ENCODE measurements at regions of chr15 and their contacts with region 1.

Region 1: GRCh38 chr15:45457641-45458433 is 64.7 kb downstream of the SLC30A4 start:
- DNase-seq: peak; percentile 82
- H3K4me3 Mint-ChIP-seq: peak overlapping the region; percentile 72
- H3K27ac Mint-ChIP-seq: peak overlapping the region; percentile 86
- H3K4me1 Mint-ChIP-seq: peaks cover 52% of the 10 kb centered on the region
- H3K27me3 Mint-ChIP-seq: peaks cover 5% of the 10 kb centered on the region

Region 2: GRCh38 chr15:45402162-45402954 is 55.5 kb before region 1 on chr15:
- CTCF ChIA-PET with region 1: interaction called, 10 read pairs
- DNase-seq: peak; percentile 97
- H3K4me3 Mint-ChIP-seq: peak overlapping the region; percentile 97
- H3K27ac Mint-ChIP-seq: peak overlapping the region; percentile 94
- H3K4me1 Mint-ChIP-seq: peaks cover 42% of the 10 kb centered on the region
- H3K27me3 Mint-ChIP-seq: no peaks in the 10 kb centered on the region

Region 3: DNA sequence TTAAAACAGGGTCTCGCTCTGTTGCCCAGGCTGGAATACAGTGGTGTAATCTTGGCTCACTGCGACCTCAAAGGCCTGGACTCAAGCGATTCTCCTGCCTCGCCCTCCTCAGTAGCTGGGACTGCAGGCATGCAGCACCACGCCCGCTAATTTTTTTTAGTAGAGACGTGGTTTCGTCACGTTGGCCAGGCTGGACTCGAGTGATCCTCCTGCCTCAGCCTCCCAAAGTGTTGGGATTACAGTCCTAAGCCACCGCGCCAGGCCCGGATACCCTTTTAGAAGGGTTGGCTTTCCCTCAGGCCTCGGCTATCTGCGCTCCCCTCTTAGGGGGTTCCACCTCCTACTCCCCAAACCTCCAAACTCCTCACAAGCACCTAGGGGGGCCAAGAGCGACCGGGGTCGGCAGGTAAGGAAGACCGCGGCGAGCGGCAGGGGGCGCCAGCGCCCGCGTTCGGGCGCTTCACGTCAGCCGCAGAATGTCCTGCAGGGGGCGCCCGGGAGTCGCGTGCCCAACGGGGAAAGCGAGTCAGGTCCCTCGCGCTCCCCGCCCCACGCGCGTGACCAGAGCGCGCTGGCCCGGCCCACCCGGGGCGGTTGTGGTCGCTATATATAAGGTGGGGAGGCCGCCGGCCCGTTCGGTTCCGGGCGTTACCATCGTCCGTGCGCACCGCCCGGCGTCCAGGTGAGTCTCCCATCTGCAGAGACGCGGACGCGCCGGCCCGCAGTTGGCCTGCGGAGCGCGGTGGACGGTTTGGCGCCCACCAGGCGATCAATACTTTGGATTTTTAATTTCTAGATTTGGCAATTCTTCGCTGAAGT is 27.7 kb before region 1 on chr15:
- CTCF ChIA-PET with region 1: interaction called, 138 read pairs
- DNase-seq: peak; percentile 89
- H3K4me3 Mint-ChIP-seq: peak overlapping the region; percentile 41
- H3K27ac Mint-ChIP-seq: no peak overlapping the region
- H3K4me1 Mint-ChIP-seq: peaks cover 5% of the 10 kb centered on the region
- H3K27me3 Mint-ChIP-seq: peaks cover 39% of the 10 kb centered on the region

Region 4: GRCh38 chr15:45442500-45443135 is 15.2 kb before region 1 on chr15:
- CTCF ChIA-PET with region 1: interaction called, 11 read pairs
- DNase-seq: no peak
- H3K4me3 Mint-ChIP-seq: no peak overlapping the region
- H3K27ac Mint-ChIP-seq: no peak overlapping the region
- H3K4me1 Mint-ChIP-seq: no peaks in the 10 kb centered on the region
- H3K27me3 Mint-ChIP-seq: peaks cover 31% of the 10 kb centered on the region

Region 5: GRCh38 chr15:45611305-45611704 is 153.5 kb after region 1 on chr15:
- CTCF ChIA-PET with region 1: interaction called, 103 read pairs
- DNase-seq: no peak
- H3K4me3 Mint-ChIP-seq: no peak overlapping the region
- H3K27ac Mint-ChIP-seq: no peak overlapping the region
- H3K4me1 Mint-ChIP-seq: peaks cover 9% of the 10 kb centered on the region
- H3K27me3 Mint-ChIP-seq: no peaks in the 10 kb centered on the region